CD4-positive, alpha-beta T cell (primary cell): ENCODE measurements at regions of chrX and their contacts with region 1.

Region 1: DNA sequence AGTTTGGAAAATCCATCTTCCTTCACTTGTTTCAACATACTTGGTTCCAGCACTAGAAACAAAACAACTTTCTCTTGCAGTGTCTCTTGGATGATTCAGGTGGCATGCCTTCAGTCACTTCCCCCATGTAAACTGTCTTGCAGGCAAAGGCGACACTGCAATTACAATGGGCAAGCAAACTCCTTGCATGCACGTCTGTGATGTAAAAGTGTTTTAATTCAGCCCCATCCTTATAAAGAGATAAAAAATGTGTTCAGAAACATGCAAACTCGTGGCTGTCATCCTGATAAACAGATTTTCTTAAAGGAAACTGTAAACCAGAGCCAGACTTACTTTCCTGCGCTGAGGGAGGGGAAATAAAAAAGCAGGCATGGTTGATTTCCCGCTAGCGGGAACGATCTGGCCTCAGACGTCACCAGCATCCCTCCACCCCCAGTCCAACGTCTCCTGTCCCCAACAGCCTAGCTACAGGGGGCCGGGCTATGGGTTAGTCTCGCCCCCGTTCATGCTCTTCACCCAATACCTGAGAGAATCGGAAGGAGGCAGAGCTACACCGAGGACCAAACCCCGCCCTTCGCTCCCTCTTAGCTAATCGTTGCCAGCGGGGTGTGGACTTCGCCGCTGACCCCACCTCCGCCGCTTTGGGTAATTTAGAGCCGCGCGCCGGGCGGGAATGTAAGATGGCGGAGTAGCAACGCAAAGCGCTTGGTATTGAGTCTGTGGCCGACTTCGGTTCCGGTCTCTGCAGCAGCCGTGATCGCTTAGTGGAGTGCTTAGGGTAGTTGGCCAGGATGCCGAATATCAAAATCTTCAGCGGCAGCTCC is at the start of gene PRPS1:
- DNase-seq: peak; percentile 72 to 96 (median 82)
- ATAC-seq: peak; percentile 96
- H3K4me3 ChIP-seq: peak within 1 kb of the TSS; percentile 85
- H3K4me3 Mint-ChIP-seq: peak within 1 kb of the TSS; percentile 97
- H3K27ac ChIP-seq: peak within 1 kb of the TSS; percentile 70 to 83
- H3K27ac Mint-ChIP-seq: peak within 1 kb of the TSS; percentile 89
- H3K4me1 ChIP-seq: peaks cover 8% of the 10 kb centered on the region
- H3K4me1 Mint-ChIP-seq: peaks cover 46% of the 10 kb centered on the region
- H3K27me3 ChIP-seq: no peaks in the 10 kb centered on the region
- H3K27me3 Mint-ChIP-seq: no peaks in the 10 kb centered on the region
- CTCF ChIP-seq: no peak
- total RNA-seq, gene PRPS1: 66.5 to 70.4 TPM

Region 2: DNA sequence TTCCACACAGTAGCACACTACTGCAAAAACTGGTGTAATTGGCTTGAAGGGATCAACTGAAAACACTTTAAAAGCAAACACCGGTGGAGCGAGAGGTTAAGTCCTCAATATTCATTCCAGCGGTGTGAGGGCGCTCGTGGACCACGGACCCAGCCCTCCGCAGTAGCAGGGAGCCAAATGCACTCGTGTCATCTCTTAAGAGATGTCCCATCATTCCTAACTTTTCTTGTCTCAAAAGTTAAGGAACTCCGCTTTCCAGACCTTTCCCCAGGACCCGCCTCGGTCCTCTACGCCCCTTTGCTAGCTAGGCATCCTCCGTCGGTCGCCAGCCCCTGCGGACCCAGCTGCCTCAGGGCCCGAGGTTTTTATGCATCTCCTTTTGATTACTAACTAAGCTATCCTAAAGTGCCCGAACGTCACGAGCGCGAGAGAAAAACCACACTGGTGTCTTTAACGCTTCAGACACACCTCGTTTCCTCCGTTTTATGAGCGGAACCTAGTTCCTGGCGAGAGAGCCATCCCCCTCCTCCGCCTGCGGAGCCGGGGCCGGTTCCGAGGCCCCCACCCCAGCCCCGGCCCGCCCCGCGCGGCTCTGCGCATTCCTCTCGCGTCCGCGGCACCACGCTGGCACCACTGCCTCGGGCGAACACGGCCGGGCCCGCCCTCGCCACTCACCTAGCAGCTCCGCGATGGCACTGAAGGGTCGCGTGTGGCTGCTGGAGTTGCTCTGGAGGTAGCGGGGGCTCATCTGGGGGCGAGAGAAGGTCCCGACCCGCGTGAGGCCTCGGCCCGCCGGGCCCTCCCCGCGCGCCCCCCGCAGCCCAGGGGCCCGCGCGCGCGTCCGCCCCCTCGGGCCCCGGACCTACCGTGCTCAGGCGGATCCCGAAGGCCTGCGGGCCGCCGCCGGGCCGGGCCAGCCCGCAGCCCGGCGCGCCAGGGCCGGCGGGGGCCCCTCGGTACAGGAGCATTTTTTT is 628.8 kb before region 1 on chrX:
- CTCF ChIA-PET with region 1: no interaction called
- POLR2A ChIA-PET with region 1: interaction called, 9 read pairs
- intact Hi-C with region 1: loop called in 1 of 2 experiments (anchors 5 kb)
- DNase-seq: peak; percentile 5 to 69 (median 36)
- ATAC-seq: peak; percentile 74
- H3K4me3 ChIP-seq: peak overlapping the region; percentile 62
- H3K4me3 Mint-ChIP-seq: peak overlapping the region; percentile 88
- H3K27ac ChIP-seq: no peak overlapping the region
- H3K27ac Mint-ChIP-seq: peak overlapping the region; percentile 73
- H3K4me1 ChIP-seq: peaks cover 8% of the 10 kb centered on the region
- H3K4me1 Mint-ChIP-seq: peaks cover 13% of the 10 kb centered on the region
- H3K27me3 ChIP-seq: no peaks in the 10 kb centered on the region
- H3K27me3 Mint-ChIP-seq: no peaks in the 10 kb centered on the region
- CTCF ChIP-seq: peak; percentile 49

Region 3: GRCh38 chrX:107646735-107647134 is 18.7 kb after region 1 on chrX:
- CTCF ChIA-PET with region 1: no interaction called
- POLR2A ChIA-PET with region 1: interaction called, 26 read pairs
- intact Hi-C with region 1: no loop called
- DNase-seq: no peak
- ATAC-seq: no peak
- H3K4me3 ChIP-seq: no peak overlapping the region
- H3K4me3 Mint-ChIP-seq: no peak overlapping the region
- H3K27ac ChIP-seq: no peak overlapping the region
- H3K27ac Mint-ChIP-seq: no peak overlapping the region
- H3K4me1 ChIP-seq: no peaks in the 10 kb centered on the region
- H3K4me1 Mint-ChIP-seq: no peaks in the 10 kb centered on the region
- H3K27me3 ChIP-seq: no peaks in the 10 kb centered on the region
- H3K27me3 Mint-ChIP-seq: no peaks in the 10 kb centered on the region
- CTCF ChIP-seq: no peak

Region 4: GRCh38 chrX:107672955-107673378 is 44.9 kb after region 1 on chrX:
- CTCF ChIA-PET with region 1: interaction called, 8 read pairs
- POLR2A ChIA-PET with region 1: interaction called, 33 read pairs
- intact Hi-C with region 1: no loop called
- DNase-seq: peak; percentile 67 to 94 (median 78)
- ATAC-seq: peak; percentile 45
- H3K4me3 ChIP-seq: peak overlapping the region; percentile 33
- H3K4me3 Mint-ChIP-seq: peak overlapping the region; percentile 87
- H3K27ac ChIP-seq: peak overlapping the region; percentile 97 to 98
- H3K27ac Mint-ChIP-seq: peak overlapping the region; percentile 99
- H3K4me1 ChIP-seq: peaks cover 59% of the 10 kb centered on the region
- H3K4me1 Mint-ChIP-seq: peaks cover 51% of the 10 kb centered on the region
- H3K27me3 ChIP-seq: no peaks in the 10 kb centered on the region
- H3K27me3 Mint-ChIP-seq: no peaks in the 10 kb centered on the region
- CTCF ChIP-seq: peak; percentile 58

Region 5: GRCh38 chrX:107741404-107741790 is 113.3 kb after region 1 on chrX:
- CTCF ChIA-PET with region 1: no interaction called
- POLR2A ChIA-PET with region 1: interaction called, 25 read pairs
- intact Hi-C with region 1: no loop called
- DNase-seq: peak in 2 of 14 experiments; percentile 3 to 5
- ATAC-seq: peak; percentile 10
- H3K4me3 ChIP-seq: peak overlapping the region; percentile 17
- H3K4me3 Mint-ChIP-seq: peak overlapping the region; percentile 88
- H3K27ac ChIP-seq: peak overlapping the region; percentile 46 to 82
- H3K27ac Mint-ChIP-seq: peak overlapping the region; percentile 98
- H3K4me1 ChIP-seq: peaks cover 61% of the 10 kb centered on the region
- H3K4me1 Mint-ChIP-seq: peaks cover 47% of the 10 kb centered on the region
- H3K27me3 ChIP-seq: no peaks in the 10 kb centered on the region
- H3K27me3 Mint-ChIP-seq: peaks cover 7% of the 10 kb centered on the region
- CTCF ChIP-seq: no peak

Region 6: GRCh38 chrX:108091266-108091877 is 463.3 kb after region 1 on chrX and contains the starts of genes ATG4A and PSMD10:
- CTCF ChIA-PET with region 1: no interaction called
- POLR2A ChIA-PET with region 1: interaction called, 14 read pairs
- intact Hi-C with region 1: loop called in 1 of 2 experiments (anchors 5 kb)
- DNase-seq: peak; percentile 75 to 95 (median 84)
- ATAC-seq: peak; percentile 95
- H3K4me3 ChIP-seq: peak within 1 kb of the TSS; percentile 87
- H3K4me3 Mint-ChIP-seq: no peak within 1 kb of the TSS
- H3K27ac ChIP-seq: peak within 1 kb of the TSS; percentile 72 to 87
- H3K27ac Mint-ChIP-seq: no peak within 1 kb of the TSS
- H3K4me1 ChIP-seq: peaks cover 11% of the 10 kb centered on the region
- H3K4me1 Mint-ChIP-seq: peaks cover 8% of the 10 kb centered on the region
- H3K27me3 ChIP-seq: no peaks in the 10 kb centered on the region
- H3K27me3 Mint-ChIP-seq: no peaks in the 10 kb centered on the region
- CTCF ChIP-seq: no peak
- total RNA-seq, gene ATG4A: 2.9 to 4.0 TPM
- total RNA-seq, gene PSMD10: 18.6 to 24.1 TPM